ENCODE measurements at regions of chr12 and their contacts with region 1.

Region 1: GRCh38 chr12:54993161-54993835 is 8.7 kb upstream of the TESPA1 start:
- DNase-seq: peak; percentile 20
- H3K4me3 ChIP-seq: no peak overlapping the region
- H3K27ac ChIP-seq: no peak overlapping the region
- H3K27me3 ChIP-seq: no peaks in the 10 kb centered on the region
- CTCF ChIP-seq: peak; percentile 82

Region 2: DNA sequence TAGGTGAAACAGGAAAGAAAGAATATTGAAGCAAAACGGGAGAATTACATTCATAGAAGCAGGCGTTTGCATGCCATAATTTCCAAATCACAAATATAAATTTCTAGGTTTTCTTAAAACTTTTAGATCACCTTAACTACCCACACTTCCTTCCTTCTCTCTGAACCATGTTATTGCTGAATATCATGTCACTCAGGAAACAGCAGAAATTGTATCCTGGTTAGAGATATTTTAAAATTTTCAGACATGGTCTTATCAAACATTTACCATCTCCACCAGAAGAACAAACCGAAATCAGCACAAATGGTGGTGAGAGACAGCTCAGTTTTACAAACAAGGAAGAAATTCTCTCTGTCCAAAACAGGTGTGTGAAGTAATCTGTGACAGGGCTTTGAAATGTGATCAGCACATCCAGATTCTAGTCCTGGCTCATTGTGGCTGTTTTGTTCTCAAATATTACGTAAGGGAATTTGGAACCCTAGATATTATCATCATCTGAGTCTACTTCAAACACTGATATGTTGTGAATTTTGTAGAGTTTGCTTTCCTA is 25.0 kb before region 1 on chr12:
- CTCF ChIA-PET with region 1: interaction called, 41 read pairs
- POLR2A ChIA-PET with region 1: no interaction called
- DNase-seq: no peak
- H3K4me3 ChIP-seq: no peak overlapping the region
- H3K27ac ChIP-seq: no peak overlapping the region
- H3K27me3 ChIP-seq: no peaks in the 10 kb centered on the region
- CTCF ChIP-seq: no peak

Region 3: GRCh38 chr12:55019779-55020178 is 26.5 kb after region 1 on chr12 and contains the start of gene NEUROD4:
- CTCF ChIA-PET with region 1: interaction called, 11 read pairs
- POLR2A ChIA-PET with region 1: no interaction called
- DNase-seq: peak; percentile 3
- H3K4me3 ChIP-seq: no peak within 1 kb of the TSS
- H3K27ac ChIP-seq: no peak within 1 kb of the TSS
- H3K27me3 ChIP-seq: no peaks in the 10 kb centered on the region
- CTCF ChIP-seq: no peak
- polyA plus RNA-seq, gene NEUROD4: not detected in 2 replicates

Region 4: GRCh38 chr12:55049676-55050075 is 56.4 kb after region 1 on chr12:
- CTCF ChIA-PET with region 1: interaction called, 16 read pairs
- POLR2A ChIA-PET with region 1: interaction called, 5 read pairs
- DNase-seq: no peak
- H3K4me3 ChIP-seq: no peak overlapping the region
- H3K27ac ChIP-seq: no peak overlapping the region
- H3K27me3 ChIP-seq: no peaks in the 10 kb centered on the region
- CTCF ChIP-seq: no peak

Region 5: GRCh38 chr12:55063291-55063690 is 70.0 kb after region 1 on chr12:
- CTCF ChIA-PET with region 1: interaction called, 254 read pairs
- POLR2A ChIA-PET with region 1: no interaction called
- DNase-seq: no peak
- H3K4me3 ChIP-seq: no peak overlapping the region
- H3K27ac ChIP-seq: no peak overlapping the region
- H3K27me3 ChIP-seq: no peaks in the 10 kb centered on the region
- CTCF ChIP-seq: no peak

Region 6: DNA sequence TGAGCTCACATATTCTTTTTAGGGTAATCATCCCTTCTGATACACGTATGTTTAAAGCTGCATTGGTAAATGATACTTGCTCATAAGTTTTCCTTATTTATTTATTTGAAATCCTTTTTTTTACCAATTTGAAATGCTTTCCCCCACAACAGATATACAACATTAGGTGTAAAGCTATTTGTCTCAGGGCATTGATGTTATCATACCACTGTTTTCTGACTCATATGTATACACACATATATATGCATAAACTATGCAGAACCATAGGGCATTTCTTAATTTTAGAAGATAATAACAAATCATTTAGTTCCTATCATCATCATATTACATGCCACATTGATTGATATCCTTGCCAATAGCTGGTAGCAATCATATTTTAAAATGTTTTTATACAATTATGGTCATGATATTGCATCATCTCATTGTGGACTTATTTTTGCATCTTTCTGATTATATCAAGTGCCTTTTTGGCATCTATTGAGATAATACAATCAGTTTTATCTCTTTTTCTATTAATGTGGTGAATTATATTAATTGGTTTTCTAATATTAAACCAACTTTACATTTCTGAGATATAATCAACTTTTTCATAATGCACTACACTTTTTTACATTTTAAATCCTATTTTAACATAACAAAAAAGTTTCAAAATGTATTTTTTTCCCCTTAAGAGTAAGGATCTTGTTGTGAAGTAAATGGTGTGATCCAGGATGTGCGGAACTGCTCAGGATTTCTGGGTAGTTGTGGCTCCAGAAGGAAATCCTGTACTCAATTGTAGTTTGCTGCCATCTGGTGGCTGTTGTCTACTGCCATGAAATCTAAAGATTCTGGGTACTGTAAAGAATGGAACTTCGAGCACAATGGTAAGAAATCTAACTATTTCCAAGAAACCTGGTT is 149.6 kb after region 1 on chr12:
- CTCF ChIA-PET with region 1: interaction called, 13 read pairs
- POLR2A ChIA-PET with region 1: no interaction called
- DNase-seq: no peak
- H3K4me3 ChIP-seq: no peak overlapping the region
- H3K27ac ChIP-seq: no peak overlapping the region
- H3K27me3 ChIP-seq: no peaks in the 10 kb centered on the region
- CTCF ChIP-seq: peak; percentile 73

Measured in AG04450 (cell line).